ENCODE measurements at regions of chr1 and their contacts with region 1.

Region 1: DNA sequence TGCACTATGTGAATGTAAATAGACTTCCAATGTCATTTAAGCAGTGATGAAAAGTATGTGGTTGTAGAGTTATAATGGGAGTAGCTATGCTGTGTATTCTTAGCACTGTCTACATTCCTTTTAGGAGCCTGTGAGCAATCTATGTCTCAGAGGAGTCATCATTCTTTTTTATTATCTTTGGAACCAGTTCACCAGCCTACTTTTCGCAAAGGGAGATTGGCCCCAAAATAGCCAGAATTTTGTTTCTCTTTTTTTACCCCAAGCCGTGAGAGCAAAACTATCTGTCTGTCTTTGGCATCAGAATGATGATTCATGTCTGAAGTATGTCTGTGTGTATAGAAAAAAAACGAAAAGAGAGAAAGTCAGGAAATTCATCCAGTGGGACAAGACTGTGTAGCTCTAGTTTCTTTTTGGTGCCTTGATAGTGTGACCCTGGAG is 44.2 kb downstream of the OSBPL9 start:
- DNase-seq: no peak
- ATAC-seq: peak; percentile 83 to 90 (median 83)
- H3K4me3 ChIP-seq: no peak overlapping the region
- H3K27ac ChIP-seq: peak overlapping the region; percentile 75
- H3K4me1 ChIP-seq: peaks cover 88% of the 10 kb centered on the region
- H3K27me3 ChIP-seq: no peaks in the 10 kb centered on the region
- CTCF ChIP-seq: no peak

Region 2: GRCh38 chr1:51622455-51622913 is 38.6 kb before region 1 on chr1:
- intact Hi-C with region 1: loop called (anchors 5 kb)
- DNase-seq: peak; percentile 70 to 87
- ATAC-seq: peak; percentile 86 to 93 (median 91)
- H3K4me3 ChIP-seq: peak overlapping the region; percentile 90
- H3K27ac ChIP-seq: peak overlapping the region; percentile 97
- H3K4me1 ChIP-seq: peaks cover 76% of the 10 kb centered on the region
- H3K27me3 ChIP-seq: no peaks in the 10 kb centered on the region
- CTCF ChIP-seq: no peak

Measured in psoas muscle (tissue), 8 donors.